ENCODE measurements at regions of chr6 and their contacts with region 1.

Region 1: GRCh38 chr6:18154507-18155149 is at the start of gene TPMT:
- DNase-seq: no peak
- H3K4me3 ChIP-seq: peak within 1 kb of the TSS; percentile 89 to 99 (median 95)
- H3K27ac ChIP-seq: peak within 1 kb of the TSS; percentile 93 to 99 (median 95)
- H3K4me1 ChIP-seq: peaks cover 11 to 32% (median 13%) of the 10 kb centered on the region in 3 donors
- H3K27me3 ChIP-seq: no peaks in the 10 kb centered on the region
- CTCF ChIP-seq: no peak
- POLR2A ChIP-seq: peak in 2 of 4 donors; percentile 60 to 62
- total RNA-seq, gene TPMT: 8.1 to 16.1 (median 12.7) TPM

Region 2: GRCh38 chr6:18264219-18264922 is 109.7 kb after region 1 on chr6 and contains the start of gene DEK:
- intact Hi-C with region 1: loop called (anchors 5 kb)
- DNase-seq: no peak
- H3K4me3 ChIP-seq: peak within 1 kb of the TSS; percentile 71 to 97 (median 80)
- H3K27ac ChIP-seq: peak within 1 kb of the TSS; percentile 94 to 99 (median 98)
- H3K4me1 ChIP-seq: peaks cover 8 to 48% (median 23%) of the 10 kb centered on the region in 3 donors
- H3K27me3 ChIP-seq: no peaks in the 10 kb centered on the region
- CTCF ChIP-seq: peak; percentile 9 to 71 (median 50)
- POLR2A ChIP-seq: peak in 2 of 4 donors; percentile 26 to 57
- total RNA-seq, gene DEK: 69.5 to 106 (median 93.0) TPM

Measured in esophagus squamous epithelium (tissue), 5 donors.